ENCODE measurements at regions of chr3 and their contacts with region 1.

Region 1: DNA sequence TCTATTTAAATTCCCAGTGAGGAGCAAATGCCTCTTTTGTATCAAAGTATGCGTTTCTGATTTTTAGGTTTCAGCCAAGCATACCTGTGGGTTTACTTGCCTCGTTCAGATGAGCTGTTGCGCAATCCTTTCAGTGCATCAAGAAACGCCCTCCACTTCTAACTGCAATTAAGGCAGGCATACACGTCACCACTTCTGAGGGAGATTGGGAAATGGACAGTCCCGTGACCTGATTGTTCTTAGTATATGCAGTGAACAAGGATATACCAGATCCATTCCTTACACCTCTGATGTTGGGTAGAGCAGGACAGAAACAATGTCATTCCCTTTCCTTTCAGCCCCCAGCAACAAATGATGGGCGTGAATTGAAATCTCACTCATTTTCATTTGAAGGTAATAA is 219.0 kb downstream of the ITPR1 start:
- DNase-seq: no peak
- ATAC-seq: no peak
- H3K4me3 ChIP-seq: no peak overlapping the region
- H3K27ac ChIP-seq: no peak overlapping the region
- H3K4me1 ChIP-seq: no peaks in the 10 kb centered on the region; a peak in 1 of 5 replicates
- H3K27me3 ChIP-seq: no peaks in the 10 kb centered on the region
- CTCF ChIP-seq: no peak
- EP300 ChIP-seq: no peak
- POLR2A ChIP-seq: no peak
- RAD21 ChIP-seq: 0 out of 4 replicates have a peak, but pooled peaks of 1 of the 2 experiments have one; percentile 3

Region 2: DNA sequence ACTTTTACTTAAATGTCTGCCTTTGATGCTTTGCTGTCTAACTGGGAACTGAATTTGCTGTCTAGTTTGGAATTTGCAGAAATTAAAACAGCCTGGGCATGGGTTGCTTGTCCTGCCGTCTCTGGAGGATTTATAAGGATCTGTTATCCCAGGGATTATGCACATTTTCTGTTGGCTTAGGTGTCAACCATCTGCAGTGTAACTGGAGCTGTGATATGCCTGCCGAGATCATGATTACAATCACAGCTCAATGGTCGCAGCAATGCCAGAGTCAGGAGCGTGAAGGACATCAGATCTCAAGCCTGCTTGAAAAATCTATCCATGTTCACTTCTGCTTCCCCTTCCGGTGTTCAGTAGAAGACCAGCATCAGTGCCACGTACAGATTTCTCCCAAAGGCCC is 450.7 kb before region 1 on chr3:
- CTCF ChIA-PET with region 1: no interaction called
- POLR2A ChIA-PET with region 1: no interaction called
- in situ Hi-C with region 1: no loop called
- intact Hi-C with region 1: no loop called
- DNase-seq: no peak
- ATAC-seq: no peak
- H3K4me3 ChIP-seq: no peak overlapping the region
- H3K27ac ChIP-seq: no peak overlapping the region
- H3K4me1 ChIP-seq: no peaks in the 10 kb centered on the region; a peak in 1 of 5 replicates
- H3K27me3 ChIP-seq: no peaks in the 10 kb centered on the region
- CTCF ChIP-seq: no peak
- EP300 ChIP-seq: no peak
- POLR2A ChIP-seq: no peak
- RAD21 ChIP-seq: no peak

Region 3: DNA sequence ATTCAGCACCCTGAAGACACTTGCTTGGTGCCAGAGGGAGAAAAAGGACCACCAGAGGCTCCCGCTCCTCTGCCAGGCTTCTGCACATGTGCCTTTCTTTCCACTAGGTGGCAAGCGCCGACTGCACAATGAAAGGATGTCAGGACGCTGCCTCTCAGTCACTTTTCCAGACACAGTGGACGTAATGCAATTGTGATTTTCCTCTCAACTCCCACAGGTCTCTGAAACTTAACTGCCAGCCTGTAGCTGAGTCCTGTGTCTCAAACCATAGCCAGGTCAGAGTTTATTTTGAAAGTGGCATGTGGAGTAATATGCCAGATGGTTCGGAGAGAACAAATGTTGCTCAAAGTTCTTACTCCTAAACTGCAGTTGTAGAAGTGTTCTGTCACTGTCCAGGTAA is 56.1 kb before region 1 on chr3:
- CTCF ChIA-PET with region 1: no interaction called
- POLR2A ChIA-PET with region 1: no interaction called
- in situ Hi-C with region 1: no loop called
- intact Hi-C with region 1: loop called (anchors 5 kb)
- DNase-seq: peak; percentile 64 to 82 (median 70)
- ATAC-seq: peak; percentile 99
- H3K4me3 ChIP-seq: no peak overlapping the region
- H3K27ac ChIP-seq: no peak overlapping the region
- H3K4me1 ChIP-seq: no peaks in the 10 kb centered on the region
- H3K27me3 ChIP-seq: no peaks in the 10 kb centered on the region
- CTCF ChIP-seq: peak; percentile 90 to 98 (median 96)
- EP300 ChIP-seq: no peak
- POLR2A ChIP-seq: no peak
- RAD21 ChIP-seq: peak; percentile 46 to 81

Region 4: GRCh38 chr3:4845882-4846281 is 133.7 kb after region 1 on chr3:
- CTCF ChIA-PET with region 1: no interaction called
- POLR2A ChIA-PET with region 1: no interaction called
- in situ Hi-C with region 1: no loop called
- intact Hi-C with region 1: no loop called
- DNase-seq: no peak
- ATAC-seq: no peak
- H3K4me3 ChIP-seq: no peak overlapping the region
- H3K27ac ChIP-seq: no peak overlapping the region
- H3K4me1 ChIP-seq: peaks cover 0 to 20% of the 10 kb centered on the region in 2 experiments; a peak in 3 of 5 replicates
- H3K27me3 ChIP-seq: no peaks in the 10 kb centered on the region
- CTCF ChIP-seq: no peak
- EP300 ChIP-seq: no peak
- POLR2A ChIP-seq: no peak
- RAD21 ChIP-seq: no peak

Region 5: GRCh38 chr3:4986782-4987537 is 274.8 kb after region 1 on chr3:
- CTCF ChIA-PET with region 1: interaction called, 3 read pairs
- POLR2A ChIA-PET with region 1: interaction called, 15 read pairs
- in situ Hi-C with region 1: no loop called
- intact Hi-C with region 1: no loop called
- DNase-seq: peak; percentile 61 to 97 (median 76)
- ATAC-seq: peak; percentile 84
- H3K4me3 ChIP-seq: peak overlapping the region; percentile 41
- H3K27ac ChIP-seq: peak overlapping the region; percentile 83
- H3K4me1 ChIP-seq: peaks cover 49 to 75% of the 10 kb centered on the region in 2 experiments
- H3K27me3 ChIP-seq: no peaks in the 10 kb centered on the region
- CTCF ChIP-seq: no peak
- EP300 ChIP-seq: peak; percentile 66
- POLR2A ChIP-seq: peak; percentile 78
- RAD21 ChIP-seq: peak in 1 of 2 experiments; percentile 26; a peak in 1 of 4 replicates

Region 6: DNA sequence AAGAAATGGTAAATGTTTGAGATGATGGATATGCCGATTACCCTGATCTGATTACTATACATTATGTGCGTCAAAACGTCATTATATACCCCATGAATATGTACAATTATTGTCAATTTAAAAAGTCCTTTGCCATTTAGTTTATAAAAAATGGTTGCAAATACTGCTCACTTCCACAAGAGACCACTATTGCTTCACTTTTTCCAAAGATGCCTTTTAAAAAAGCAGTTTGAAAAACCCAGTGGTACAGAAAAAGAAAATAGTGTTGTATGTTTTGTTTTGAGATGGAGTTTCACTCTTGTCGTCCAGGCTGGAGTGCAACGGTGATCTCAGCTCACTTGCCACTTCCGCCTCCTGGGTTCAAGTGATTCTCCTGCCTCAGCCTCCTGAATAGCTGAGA is 514.6 kb after region 1 on chr3:
- CTCF ChIA-PET with region 1: no interaction called
- POLR2A ChIA-PET with region 1: no interaction called
- in situ Hi-C with region 1: no loop called
- intact Hi-C with region 1: loop called (anchors 10 kb)
- DNase-seq: peak in 2 of 4 experiments; percentile 39 to 41
- ATAC-seq: peak; percentile 46; the same call in 2 of the 3 replicates
- H3K4me3 ChIP-seq: no peak overlapping the region
- H3K27ac ChIP-seq: no peak overlapping the region
- H3K4me1 ChIP-seq: peaks cover 0 to 3% of the 10 kb centered on the region in 2 experiments; a peak in 2 of 5 replicates
- H3K27me3 ChIP-seq: peaks cover 29 to 47% of the 10 kb centered on the region in 2 experiments; a peak in 3 of 5 replicates
- CTCF ChIP-seq: peak; percentile 40 to 87 (median 56); a peak in 5 of 6 replicates
- EP300 ChIP-seq: no peak
- POLR2A ChIP-seq: no peak
- RAD21 ChIP-seq: peak; percentile 76 to 89